ENCODE measurements at regions of chr7 and their contacts with region 1.

Region 1: DNA sequence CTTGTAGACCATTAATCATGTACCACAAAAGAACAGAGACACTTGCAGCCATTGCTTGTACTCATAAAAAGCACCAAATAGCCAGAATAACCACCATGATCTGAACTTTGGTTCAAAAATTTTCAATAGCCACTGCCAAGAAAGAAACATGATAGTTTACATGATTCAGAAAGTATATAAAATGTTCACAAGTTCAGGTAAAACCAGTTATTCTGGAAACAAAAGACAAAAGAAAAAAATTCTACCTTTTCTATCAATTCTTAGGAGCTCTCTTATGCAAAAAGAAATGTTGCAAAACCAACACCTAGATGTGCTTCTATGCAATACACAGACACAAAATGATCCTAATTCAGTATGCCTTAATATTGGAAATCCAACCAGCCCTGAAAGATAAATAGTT is 108.7 kb downstream of the PCLO start:
- DNase-seq: no peak
- H3K4me3 ChIP-seq: no peak overlapping the region
- H3K27ac ChIP-seq: no peak overlapping the region
- H3K4me1 ChIP-seq: no peaks in the 10 kb centered on the region
- H3K27me3 ChIP-seq: no peaks in the 10 kb centered on the region
- CTCF ChIP-seq: no peak
- POLR2A ChIP-seq: no peak

Region 2: GRCh38 chr7:82234457-82235049 is 819.4 kb before region 1 on chr7:
- intact Hi-C with region 1: no loop called
- DNase-seq: no peak
- H3K4me3 ChIP-seq: no peak overlapping the region
- H3K27ac ChIP-seq: no peak overlapping the region
- H3K4me1 ChIP-seq: no peaks in the 10 kb centered on the region
- H3K27me3 ChIP-seq: no peaks in the 10 kb centered on the region
- CTCF ChIP-seq: peak; percentile 48 to 74 (median 63)
- POLR2A ChIP-seq: no peak

Region 3: DNA sequence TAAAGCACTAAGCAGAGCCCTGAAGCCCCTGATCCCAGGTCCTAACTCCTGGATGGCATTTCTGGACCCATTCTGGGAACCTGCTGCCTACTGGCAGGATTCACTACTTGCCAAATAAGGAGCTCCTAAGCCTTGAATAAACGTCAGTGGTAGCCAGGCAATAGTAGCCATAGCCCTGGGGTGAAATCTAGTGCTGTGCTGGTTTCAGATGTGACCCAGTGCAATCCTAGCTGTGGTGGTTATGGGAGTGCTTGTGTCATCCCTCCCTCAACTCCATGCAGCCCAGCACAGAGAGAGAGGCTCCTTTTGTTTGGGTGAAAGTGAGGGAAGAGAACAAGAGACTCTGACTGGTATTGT is 65.0 kb after region 1 on chr7:
- intact Hi-C with region 1: loop called in 1 of 2 experiments (anchors 10 kb)
- DNase-seq: no peak
- H3K4me3 ChIP-seq: no peak overlapping the region
- H3K27ac ChIP-seq: no peak overlapping the region
- H3K4me1 ChIP-seq: peaks cover 0 to 9% of the 10 kb centered on the region in 2 donors
- H3K27me3 ChIP-seq: no peaks in the 10 kb centered on the region
- CTCF ChIP-seq: no peak
- POLR2A ChIP-seq: no peak

Measured in adrenal gland (tissue), 19 donors.